Gastrocnemius medialis (tissue), 4 donors: ENCODE measurements at regions of chr13 and their contacts with region 1.

Region 1: DNA sequence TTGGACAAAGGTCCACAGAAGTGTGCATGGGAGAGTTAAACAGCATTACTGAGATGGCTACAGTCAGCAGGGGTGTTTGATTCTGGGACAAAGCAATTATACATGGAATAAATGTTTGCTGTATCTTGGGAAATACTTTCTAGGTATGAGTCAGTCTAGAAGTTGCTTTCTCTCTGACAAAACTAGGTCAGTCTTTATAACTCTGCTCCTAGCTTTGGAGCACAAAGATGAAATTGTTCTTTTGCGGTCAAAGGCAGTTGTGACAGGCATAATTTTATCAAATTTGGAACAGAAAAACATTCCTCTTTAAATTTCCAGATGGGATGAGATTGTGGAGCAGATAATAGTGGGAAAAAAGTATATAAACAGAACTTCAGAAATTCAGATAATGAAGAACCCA is 1045.4 kb upstream of the MIR17HG start:
- DNase-seq: no peak
- ATAC-seq: peak in 1 of 2 donors; percentile 56
- H3K4me3 ChIP-seq: no peak overlapping the region
- H3K27ac ChIP-seq: no peak overlapping the region
- H3K4me1 ChIP-seq: no peaks in the 10 kb centered on the region
- H3K27me3 ChIP-seq: no peaks in the 10 kb centered on the region
- CTCF ChIP-seq: no peak
- POLR2A ChIP-seq: no peak

Region 2: GRCh38 chr13:90365130-90365529 is 63.0 kb after region 1 on chr13:
- in situ Hi-C with region 1: loop called in 1 of 4 experiments (anchors 10 kb)
- intact Hi-C with region 1: no loop called
- DNase-seq: no peak
- ATAC-seq: no peak
- H3K4me3 ChIP-seq: no peak overlapping the region
- H3K27ac ChIP-seq: no peak overlapping the region
- H3K4me1 ChIP-seq: no peaks in the 10 kb centered on the region
- H3K27me3 ChIP-seq: no peaks in the 10 kb centered on the region
- CTCF ChIP-seq: no peak
- POLR2A ChIP-seq: no peak

Region 3: DNA sequence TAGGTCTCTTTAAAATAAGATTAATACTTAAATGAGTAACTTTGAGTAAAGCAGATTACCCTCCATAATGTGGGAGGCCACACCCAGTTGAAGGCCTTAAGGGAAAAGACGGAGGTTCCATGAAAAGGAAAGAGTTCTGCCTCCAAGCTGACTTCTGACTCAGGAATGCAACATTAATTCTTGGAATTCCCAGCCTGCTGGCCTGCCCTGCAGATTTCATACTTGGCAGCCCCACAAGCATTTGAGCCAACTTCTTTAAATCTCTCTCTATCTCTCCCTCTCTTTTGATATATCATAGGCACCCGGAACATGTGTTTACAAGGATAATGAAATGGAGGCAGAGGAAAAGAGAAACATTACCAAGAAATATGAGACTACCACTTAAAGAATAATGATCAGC is 143.1 kb after region 1 on chr13:
- in situ Hi-C with region 1: no loop called
- intact Hi-C with region 1: no loop called
- DNase-seq: no peak
- ATAC-seq: peak in 1 of 2 donors; percentile 30
- H3K4me3 ChIP-seq: no peak overlapping the region
- H3K27ac ChIP-seq: no peak overlapping the region
- H3K4me1 ChIP-seq: no peaks in the 10 kb centered on the region
- H3K27me3 ChIP-seq: no peaks in the 10 kb centered on the region
- CTCF ChIP-seq: no peak
- POLR2A ChIP-seq: no peak